Panc1 (cell line): ENCODE measurements at regions of chr17 and their contacts with region 1.

Region 1: GRCh38 chr17:77036807-77037381 is 103.9 kb upstream of the SEC14L1 start:
- DNase-seq: no peak
- ATAC-seq: peak; percentile 32
- H3K4me3 ChIP-seq: no peak overlapping the region
- H3K27ac ChIP-seq: no peak overlapping the region
- H3K4me1 ChIP-seq: no peaks in the 10 kb centered on the region
- H3K27me3 ChIP-seq: no peaks in the 10 kb centered on the region
- CTCF ChIP-seq: no peak

Region 2: DNA sequence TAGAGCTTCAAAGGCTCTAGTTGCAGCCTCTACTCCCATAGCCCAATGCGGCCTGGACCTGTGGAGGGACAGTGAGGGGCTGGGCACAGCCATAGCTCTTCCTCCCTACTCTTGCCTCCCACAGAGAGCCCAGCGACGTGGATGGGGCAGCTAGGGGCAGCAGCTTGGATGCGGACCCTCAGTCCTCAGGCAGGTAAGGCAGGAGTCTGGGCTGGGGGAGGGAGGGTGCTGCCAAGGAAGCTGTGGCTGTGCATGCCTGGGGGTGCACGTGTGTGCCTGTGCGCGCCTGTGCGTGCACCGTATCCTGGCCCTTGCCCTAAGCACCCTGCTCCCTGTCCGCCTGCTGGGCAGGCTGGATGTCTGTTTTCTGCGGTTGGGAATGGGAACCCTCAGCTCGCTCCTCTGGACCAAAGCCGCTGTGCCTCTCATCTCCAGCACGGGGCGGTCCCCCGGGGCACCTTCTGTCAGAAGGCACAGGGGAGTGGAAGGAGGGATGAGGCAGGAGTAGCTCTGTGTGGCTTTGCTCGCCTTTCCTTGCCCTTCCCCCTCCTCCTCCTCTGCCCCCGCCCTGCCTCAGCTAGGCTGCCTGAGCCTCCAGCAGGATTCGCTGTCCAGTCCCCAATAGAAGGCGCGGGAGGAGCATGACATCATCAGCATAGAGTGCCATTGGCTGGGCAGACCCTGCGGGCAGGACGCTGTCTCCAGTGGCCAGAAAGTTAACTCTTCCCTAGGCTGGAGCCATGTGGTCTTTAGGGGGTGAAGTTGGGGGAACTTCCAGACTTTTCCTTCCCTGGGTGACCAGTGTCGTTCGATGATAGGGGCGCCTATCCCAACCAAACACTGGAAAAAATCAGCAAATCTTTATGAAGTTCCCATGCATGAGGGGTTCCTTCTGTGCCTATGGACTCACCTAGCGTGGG is 496.3 kb before region 1 on chr17:
- CTCF ChIA-PET with region 1: no interaction called
- POLR2A ChIA-PET with region 1: no interaction called
- in situ Hi-C with region 1: no loop called
- intact Hi-C with region 1: no loop called
- DNase-seq: no peak
- ATAC-seq: peak; percentile 92
- H3K4me3 ChIP-seq: peak overlapping the region; percentile 28 to 45
- H3K27ac ChIP-seq: peak overlapping the region; percentile 64
- H3K4me1 ChIP-seq: peaks cover 19% of the 10 kb centered on the region
- H3K27me3 ChIP-seq: no peaks in the 10 kb centered on the region; the same call in 1 of the 2 replicates
- CTCF ChIP-seq: no peak

Region 3: GRCh38 chr17:76696763-76697701 is 339.9 kb before region 1 on chr17:
- CTCF ChIA-PET with region 1: interaction called, 18 read pairs
- POLR2A ChIA-PET with region 1: no interaction called
- in situ Hi-C with region 1: no loop called
- intact Hi-C with region 1: no loop called
- DNase-seq: no peak
- ATAC-seq: no peak
- H3K4me3 ChIP-seq: no peak overlapping the region
- H3K27ac ChIP-seq: peak overlapping the region; percentile 18
- H3K4me1 ChIP-seq: peaks cover 19% of the 10 kb centered on the region
- H3K27me3 ChIP-seq: no peaks in the 10 kb centered on the region
- CTCF ChIP-seq: no peak